GM13977 (cell line): ENCODE measurements at regions of chr14 and their contacts with region 1.

Region 1: DNA sequence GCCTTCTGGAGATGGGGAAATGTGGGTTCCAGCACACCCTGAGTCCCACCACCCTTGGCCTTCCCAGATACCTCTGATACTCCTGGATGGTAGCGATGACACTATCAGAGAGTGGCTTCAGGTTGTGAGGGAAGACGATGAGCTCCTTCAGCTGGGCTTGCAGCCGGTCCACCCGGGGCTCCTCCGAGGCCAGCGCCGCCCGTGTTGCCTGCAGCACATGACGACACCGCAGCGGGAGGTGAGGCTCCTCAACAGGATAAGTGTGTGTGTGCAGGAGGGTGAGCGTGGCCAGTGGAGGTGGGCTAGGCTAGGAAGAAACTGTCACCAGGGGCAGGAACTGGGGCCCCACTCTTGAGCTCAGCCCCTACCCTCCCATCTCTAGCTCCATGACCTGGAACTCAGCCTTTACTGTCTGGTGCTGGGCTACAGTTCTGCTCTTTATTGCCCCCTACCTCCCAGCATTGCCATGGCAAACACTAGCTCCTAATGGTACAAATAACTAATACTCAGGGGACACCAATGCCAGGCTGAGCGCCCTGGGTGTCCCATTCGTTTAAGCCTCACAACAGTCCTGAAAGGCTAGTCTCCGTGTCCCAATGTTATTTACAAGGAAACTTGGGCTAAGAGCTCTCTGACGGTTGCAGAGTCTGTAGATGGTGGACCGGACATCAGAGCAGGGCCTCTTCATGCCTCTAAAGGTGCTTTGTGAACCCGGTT is 64.1 kb downstream of the SYNE3 start:
- DNase-seq: peak; percentile 61
- CTCF ChIP-seq: peak; percentile 42

Region 2: GRCh38 chr14:95527387-95528002 is 75.2 kb after region 1 on chr14:
- in situ Hi-C with region 1: loop called (anchors 5 kb)
- DNase-seq: no peak
- CTCF ChIP-seq: peak; percentile 73